PC-3 (cell line): ENCODE measurements at regions of chr14 and their contacts with region 1.

Region 1: GRCh38 chr14:59028476-59029202 is 159.8 kb upstream of the DAAM1 start:
- DNase-seq: peak; percentile 100
- ATAC-seq: peak; percentile 98
- H3K4me3 ChIP-seq: peak overlapping the region; percentile 8; the same call in 1 of the 2 replicates
- H3K27ac ChIP-seq: no peak overlapping the region
- H3K4me1 ChIP-seq: peaks cover 16% of the 10 kb centered on the region
- H3K27me3 ChIP-seq: peaks cover 27% of the 10 kb centered on the region
- CTCF ChIP-seq: peak; percentile 100

Region 2: DNA sequence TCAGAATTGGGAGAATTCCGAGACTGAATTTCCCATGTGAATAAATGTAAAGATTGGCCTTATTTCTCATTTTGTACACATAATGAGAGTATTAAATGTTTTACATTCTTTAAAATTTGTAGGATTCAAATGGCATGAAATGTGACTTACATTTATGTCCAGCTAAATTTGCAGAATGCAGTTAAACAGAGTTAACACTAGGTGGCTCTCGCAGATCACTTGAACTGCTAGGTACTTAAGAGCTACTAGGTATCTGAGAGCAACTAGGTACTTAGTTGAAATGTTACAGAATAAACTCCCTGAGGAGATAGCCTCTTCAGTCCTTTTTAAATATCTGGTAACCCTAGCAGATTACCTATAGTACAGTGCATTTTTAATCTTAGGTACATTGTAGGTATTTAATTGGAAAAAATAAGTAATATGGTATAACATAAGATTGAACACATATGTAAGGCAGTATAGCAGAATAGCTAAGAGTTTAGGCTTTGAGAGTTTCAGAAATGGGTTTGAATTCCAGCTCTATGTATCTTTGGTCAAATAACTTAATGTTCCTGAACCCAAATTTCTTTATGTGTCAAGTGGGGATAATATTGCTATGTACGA is 527.3 kb before region 1 on chr14:
- CTCF ChIA-PET with region 1: interaction called, 3 read pairs
- POLR2A ChIA-PET with region 1: no interaction called
- intact Hi-C with region 1: loop called (anchors 1 kb)
- DNase-seq: peak; percentile 97
- ATAC-seq: peak; percentile 99
- H3K4me3 ChIP-seq: no peak overlapping the region
- H3K27ac ChIP-seq: no peak overlapping the region
- H3K4me1 ChIP-seq: no peaks in the 10 kb centered on the region
- H3K27me3 ChIP-seq: no peaks in the 10 kb centered on the region
- CTCF ChIP-seq: peak; percentile 100

Region 3: GRCh38 chr14:58738189-58738836 is 290.3 kb before region 1 on chr14:
- CTCF ChIA-PET with region 1: no interaction called
- POLR2A ChIA-PET with region 1: no interaction called
- intact Hi-C with region 1: loop called (anchors 1 kb)
- DNase-seq: peak; percentile 99
- ATAC-seq: peak; percentile 99
- H3K4me3 ChIP-seq: no peak overlapping the region
- H3K27ac ChIP-seq: peak overlapping the region; percentile 50
- H3K4me1 ChIP-seq: peaks cover 32% of the 10 kb centered on the region
- H3K27me3 ChIP-seq: no peaks in the 10 kb centered on the region
- CTCF ChIP-seq: no peak

Region 4: GRCh38 chr14:58978343-58978742 is 50.3 kb before region 1 on chr14:
- CTCF ChIA-PET with region 1: no interaction called
- POLR2A ChIA-PET with region 1: no interaction called
- intact Hi-C with region 1: no loop called
- DNase-seq: no peak
- ATAC-seq: no peak
- H3K4me3 ChIP-seq: no peak overlapping the region
- H3K27ac ChIP-seq: no peak overlapping the region
- H3K4me1 ChIP-seq: peaks cover 12% of the 10 kb centered on the region
- H3K27me3 ChIP-seq: peaks cover 75% of the 10 kb centered on the region
- CTCF ChIP-seq: no peak

Region 5: DNA sequence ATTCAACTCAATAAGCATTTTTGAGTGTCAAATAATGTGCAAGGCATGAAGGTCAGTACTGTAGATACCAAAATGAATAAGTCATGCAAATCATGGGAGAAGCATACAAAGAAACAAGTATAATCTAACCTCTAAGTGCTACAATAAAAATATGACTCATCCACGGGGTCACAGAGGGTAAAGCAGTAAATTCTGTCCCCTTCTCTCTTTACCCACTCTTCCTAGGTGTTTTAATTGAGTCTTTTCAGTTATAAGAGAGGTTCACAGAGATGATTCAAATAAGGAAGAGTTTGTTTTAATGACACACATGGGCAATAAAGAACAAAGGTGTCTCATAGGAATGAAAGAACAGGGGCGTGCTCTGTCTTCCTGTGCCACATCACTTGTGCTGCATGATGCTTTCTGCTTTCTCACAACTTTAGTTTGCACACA is 88.4 kb after region 1 on chr14:
- CTCF ChIA-PET with region 1: no interaction called
- POLR2A ChIA-PET with region 1: no interaction called
- intact Hi-C with region 1: loop called (anchors 2 kb)
- DNase-seq: peak; percentile 99
- ATAC-seq: peak; percentile 93
- H3K4me3 ChIP-seq: no peak overlapping the region
- H3K27ac ChIP-seq: peak overlapping the region; percentile 76
- H3K4me1 ChIP-seq: peaks cover 25% of the 10 kb centered on the region
- H3K27me3 ChIP-seq: peaks cover 8% of the 10 kb centered on the region; the same call in 1 of the 2 replicates
- CTCF ChIP-seq: no peak

Region 6: DNA sequence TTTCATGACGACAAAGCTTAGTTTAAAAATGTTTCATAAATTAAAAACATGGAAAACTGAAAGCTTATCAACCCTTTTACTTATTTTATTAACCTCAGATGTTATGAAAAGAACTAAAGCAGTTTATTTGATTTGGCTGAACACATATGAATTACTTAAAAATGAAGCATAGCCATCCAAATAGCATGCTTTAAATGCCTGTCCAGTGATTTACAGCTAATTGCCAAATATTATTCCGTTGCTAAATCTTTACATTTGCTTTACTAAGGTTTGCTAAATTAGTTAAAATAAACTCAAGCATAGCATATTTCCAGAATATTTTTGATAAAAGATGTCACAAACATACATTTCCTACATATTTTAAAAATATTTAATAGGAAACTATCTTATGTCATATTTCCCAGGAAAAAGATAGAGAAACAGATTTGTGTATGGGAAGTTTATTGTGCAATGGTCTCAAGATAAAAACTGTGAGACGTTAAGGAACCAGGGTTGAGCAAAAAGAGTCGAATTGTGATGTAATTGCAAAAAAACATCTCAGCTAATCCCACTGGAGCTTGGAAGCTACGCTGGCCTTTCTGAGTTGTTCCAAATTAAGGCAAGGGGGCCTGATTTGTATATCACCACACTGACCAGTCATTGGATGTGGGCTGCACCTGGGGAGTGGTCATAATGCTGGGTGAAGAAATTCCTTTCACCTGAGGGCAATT is 410.8 kb after region 1 on chr14:
- CTCF ChIA-PET with region 1: interaction called, 4 read pairs
- POLR2A ChIA-PET with region 1: no interaction called
- intact Hi-C with region 1: loop called (anchors 2 kb)
- DNase-seq: no peak
- ATAC-seq: no peak
- H3K4me3 ChIP-seq: no peak overlapping the region
- H3K27ac ChIP-seq: no peak overlapping the region
- H3K4me1 ChIP-seq: peaks cover 13% of the 10 kb centered on the region
- H3K27me3 ChIP-seq: no peaks in the 10 kb centered on the region
- CTCF ChIP-seq: no peak